Breast epithelium (tissue), 4 donors: ENCODE measurements at regions of chr5 and their contacts with region 1.

Region 1: DNA sequence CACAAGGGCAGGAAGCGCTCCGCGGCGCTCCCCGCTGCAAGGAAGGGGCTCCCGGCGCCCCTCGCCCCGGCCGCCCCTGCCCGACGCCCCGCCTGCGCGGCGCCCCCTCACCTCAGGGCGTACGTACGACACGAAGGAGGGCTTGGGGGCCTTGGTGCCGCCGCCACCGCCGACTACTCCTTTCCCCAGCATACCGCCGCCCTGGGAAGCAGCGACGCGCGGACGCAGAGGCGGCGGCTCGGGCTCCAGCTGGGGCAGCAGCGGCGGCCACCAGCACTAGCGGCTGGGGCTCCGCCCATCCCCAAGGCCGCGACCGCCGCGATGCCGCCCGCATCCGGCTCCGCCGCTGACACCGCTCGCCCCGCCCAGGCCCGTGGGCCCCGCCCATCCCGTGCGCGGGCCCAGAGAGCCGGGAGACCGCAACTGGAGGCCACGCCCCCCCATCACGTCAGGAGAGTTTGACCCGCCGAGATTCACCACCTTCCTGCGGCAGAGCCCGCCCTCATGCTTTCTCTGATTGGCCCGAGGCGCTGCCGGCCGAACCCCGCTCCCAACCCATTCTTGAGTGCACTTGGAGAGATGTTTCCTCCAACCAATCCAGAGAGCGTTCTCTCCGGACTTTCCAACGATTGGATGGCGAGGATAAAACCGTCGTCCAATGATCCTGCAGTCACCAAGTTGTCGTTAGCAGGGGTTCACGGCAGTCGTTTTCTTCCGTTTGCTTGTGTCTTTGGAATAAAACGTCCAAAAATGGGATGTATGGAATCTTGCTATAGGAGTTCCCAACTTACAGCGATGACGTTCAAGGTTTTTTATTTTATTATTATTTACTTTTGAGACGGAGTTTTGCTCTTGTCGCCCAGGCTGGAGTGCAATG is at the start of gene MTMR12:
- DNase-seq: peak; percentile 99
- H3K4me3 ChIP-seq: peak within 1 kb of the TSS; percentile 69 to 100 (median 94)
- H3K27ac ChIP-seq: peak within 1 kb of the TSS; percentile 97 to 99
- H3K4me1 ChIP-seq: peaks cover 5 to 7% of the 10 kb centered on the region in 2 donors
- H3K27me3 ChIP-seq: no peaks in the 10 kb centered on the region
- CTCF ChIP-seq: no peak
- POLR2A ChIP-seq: peak; percentile 65
- total RNA-seq, gene MTMR12: 40.0 to 61.3 (median 43.0) TPM

Region 2: GRCh38 chr5:32232441-32233219 is 80.3 kb before region 1 on chr5:
- intact Hi-C with region 1: loop called (anchors 10 kb)
- DNase-seq: peak; percentile 77 to 86
- H3K4me3 ChIP-seq: no peak overlapping the region
- H3K27ac ChIP-seq: peak overlapping the region; percentile 79 to 89
- H3K4me1 ChIP-seq: peaks cover 0 to 18% of the 10 kb centered on the region in 2 donors
- H3K27me3 ChIP-seq: no peaks in the 10 kb centered on the region
- CTCF ChIP-seq: peak; percentile 79 to 91 (median 81)
- POLR2A ChIP-seq: no peak

Region 3: GRCh38 chr5:32276173-32276853 is 36.6 kb before region 1 on chr5:
- intact Hi-C with region 1: loop called (anchors 5 kb)
- DNase-seq: no peak
- H3K4me3 ChIP-seq: no peak overlapping the region
- H3K27ac ChIP-seq: peak overlapping the region; percentile 80 to 89
- H3K4me1 ChIP-seq: peaks cover 0 to 6% of the 10 kb centered on the region in 2 donors
- H3K27me3 ChIP-seq: no peaks in the 10 kb centered on the region
- CTCF ChIP-seq: no peak
- POLR2A ChIP-seq: no peak